Sigmoid colon (tissue), 7 donors: ENCODE measurements at regions of chr14 and their contacts with region 1.

Region 1: DNA sequence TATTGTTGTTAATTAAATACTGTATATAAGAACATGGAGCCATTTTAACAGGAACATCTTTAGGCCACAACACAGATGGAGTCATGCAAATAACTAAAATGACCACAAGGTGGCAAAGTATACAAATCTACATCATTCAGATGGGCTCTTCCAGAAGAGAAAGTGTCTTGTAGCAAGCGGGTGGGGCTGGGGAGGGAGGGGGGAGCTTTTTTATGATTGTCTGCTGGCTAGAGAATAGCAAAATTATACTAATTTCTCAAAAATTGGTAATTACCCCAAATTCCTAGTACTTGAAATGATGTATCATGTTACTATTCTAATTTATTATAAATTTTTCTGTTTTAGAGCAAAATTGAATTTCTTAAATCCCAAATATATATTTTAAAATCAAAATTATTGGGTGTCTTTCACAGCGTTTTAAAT is 378.7 kb downstream of the PRKD1 start:
- DNase-seq: no peak
- H3K4me3 ChIP-seq: no peak overlapping the region
- H3K27ac ChIP-seq: no peak overlapping the region
- H3K4me1 ChIP-seq: no peaks in the 10 kb centered on the region
- H3K27me3 ChIP-seq: no peaks in the 10 kb centered on the region
- CTCF ChIP-seq: peak; percentile 26 to 69 (median 36)
- EP300 ChIP-seq: no peak
- POLR2A ChIP-seq: no peak

Region 2: GRCh38 chr14:29799464-29800095 is 250.6 kb after region 1 on chr14:
- intact Hi-C with region 1: no loop called
- DNase-seq: no peak
- H3K4me3 ChIP-seq: no peak overlapping the region
- H3K27ac ChIP-seq: no peak overlapping the region
- H3K4me1 ChIP-seq: peaks cover 0 to 12% (median 0%) of the 10 kb centered on the region in 4 donors
- H3K27me3 ChIP-seq: no peaks in the 10 kb centered on the region
- CTCF ChIP-seq: no peak
- EP300 ChIP-seq: no peak
- POLR2A ChIP-seq: no peak

Region 3: GRCh38 chr14:30005114-30005808 is 456.3 kb after region 1 on chr14:
- intact Hi-C with region 1: loop called (anchors 1 kb)
- DNase-seq: no peak
- H3K4me3 ChIP-seq: no peak overlapping the region
- H3K27ac ChIP-seq: no peak overlapping the region
- H3K4me1 ChIP-seq: peaks cover 0 to 8% (median 1%) of the 10 kb centered on the region in 4 donors
- H3K27me3 ChIP-seq: no peaks in the 10 kb centered on the region
- CTCF ChIP-seq: peak; percentile 32 to 74 (median 72)
- EP300 ChIP-seq: no peak
- POLR2A ChIP-seq: no peak

Region 4: DNA sequence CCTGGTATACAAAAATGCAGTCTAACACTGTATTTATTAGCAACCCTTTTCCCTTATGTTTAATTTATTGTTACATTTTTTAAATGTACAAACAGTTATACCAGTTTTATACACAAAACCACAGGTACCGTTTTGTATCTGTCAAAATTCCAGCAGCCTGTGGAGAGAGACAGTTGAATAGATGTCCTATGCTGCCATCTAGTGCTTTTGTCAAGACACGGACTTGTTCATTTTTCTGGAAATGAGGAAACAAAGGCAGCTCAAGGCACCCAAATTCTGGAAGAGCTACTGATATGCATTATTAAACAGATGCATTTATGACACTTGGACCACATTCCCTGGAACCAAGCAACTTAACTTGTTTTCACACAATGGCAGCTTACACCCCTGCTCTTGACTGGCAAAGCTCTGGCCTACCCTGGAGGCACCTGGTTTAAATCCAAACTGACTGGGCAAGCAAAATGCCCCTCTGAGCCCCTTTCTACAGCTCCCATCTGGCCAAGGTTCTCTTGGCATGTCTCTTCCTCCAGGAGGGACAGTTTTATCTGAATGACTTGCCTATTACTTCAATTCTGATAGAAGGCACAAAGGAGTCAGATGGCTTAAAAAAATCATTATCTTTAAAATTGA is 665.6 kb after region 1 on chr14:
- intact Hi-C with region 1: loop called (anchors 5 kb)
- DNase-seq: no peak
- H3K4me3 ChIP-seq: no peak overlapping the region
- H3K27ac ChIP-seq: no peak overlapping the region
- H3K4me1 ChIP-seq: peaks cover 0 to 7% (median 0%) of the 10 kb centered on the region in 4 donors
- H3K27me3 ChIP-seq: no peaks in the 10 kb centered on the region
- CTCF ChIP-seq: peak; percentile 25 to 55 (median 40)
- EP300 ChIP-seq: no peak
- POLR2A ChIP-seq: no peak